Calu3 (cell line): ENCODE measurements at regions of chr9 and their contacts with region 1.

Region 1: DNA sequence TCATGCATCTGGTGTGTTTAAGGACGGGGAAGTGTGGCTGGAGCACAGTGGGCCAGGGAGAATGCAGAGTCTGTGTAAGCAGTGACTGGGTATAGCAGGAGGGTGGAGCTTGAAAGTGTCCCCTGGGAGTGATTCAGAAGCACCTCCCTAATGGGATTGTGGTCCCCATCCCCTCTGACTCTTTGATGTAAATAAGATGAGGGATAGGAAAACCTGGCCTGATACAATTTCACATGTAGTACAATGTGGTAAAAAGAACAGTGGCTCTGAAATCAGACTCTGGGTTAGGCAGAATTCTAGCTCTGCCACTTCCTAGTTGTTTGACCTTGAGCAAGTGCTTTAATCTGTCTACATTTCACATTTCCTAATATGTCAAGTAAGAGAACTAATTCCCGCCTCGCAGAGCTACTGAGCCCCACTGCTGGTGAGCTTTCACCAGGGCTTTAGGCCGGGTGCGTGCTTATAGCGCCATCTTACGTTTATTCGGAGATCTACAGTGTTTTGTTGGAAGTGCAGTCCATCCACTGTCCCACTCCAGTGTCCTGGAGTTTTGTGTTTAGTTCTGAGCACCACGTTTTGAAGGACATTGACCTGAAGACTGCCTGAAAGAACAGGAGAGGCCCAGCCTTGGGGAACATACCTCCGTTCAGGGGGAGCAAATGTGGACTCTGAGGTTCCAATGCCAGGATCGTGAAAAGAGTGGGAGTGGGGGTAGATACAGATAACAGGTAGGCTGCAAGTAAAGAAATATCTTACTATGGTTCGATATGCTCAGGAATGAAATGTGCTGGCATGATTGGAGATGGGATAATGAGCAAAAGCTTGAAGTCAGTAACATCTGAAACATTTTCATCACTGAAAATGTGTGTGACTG is 51.2 kb upstream of the TESK1 start:
- DNase-seq: peak; percentile 58
- H3K4me3 Mint-ChIP-seq: no peak overlapping the region
- H3K27ac Mint-ChIP-seq: no peak overlapping the region
- H3K4me1 Mint-ChIP-seq: no peaks in the 10 kb centered on the region
- H3K27me3 Mint-ChIP-seq: no peaks in the 10 kb centered on the region
- CTCF ChIP-seq: peak; percentile 58

Region 2: DNA sequence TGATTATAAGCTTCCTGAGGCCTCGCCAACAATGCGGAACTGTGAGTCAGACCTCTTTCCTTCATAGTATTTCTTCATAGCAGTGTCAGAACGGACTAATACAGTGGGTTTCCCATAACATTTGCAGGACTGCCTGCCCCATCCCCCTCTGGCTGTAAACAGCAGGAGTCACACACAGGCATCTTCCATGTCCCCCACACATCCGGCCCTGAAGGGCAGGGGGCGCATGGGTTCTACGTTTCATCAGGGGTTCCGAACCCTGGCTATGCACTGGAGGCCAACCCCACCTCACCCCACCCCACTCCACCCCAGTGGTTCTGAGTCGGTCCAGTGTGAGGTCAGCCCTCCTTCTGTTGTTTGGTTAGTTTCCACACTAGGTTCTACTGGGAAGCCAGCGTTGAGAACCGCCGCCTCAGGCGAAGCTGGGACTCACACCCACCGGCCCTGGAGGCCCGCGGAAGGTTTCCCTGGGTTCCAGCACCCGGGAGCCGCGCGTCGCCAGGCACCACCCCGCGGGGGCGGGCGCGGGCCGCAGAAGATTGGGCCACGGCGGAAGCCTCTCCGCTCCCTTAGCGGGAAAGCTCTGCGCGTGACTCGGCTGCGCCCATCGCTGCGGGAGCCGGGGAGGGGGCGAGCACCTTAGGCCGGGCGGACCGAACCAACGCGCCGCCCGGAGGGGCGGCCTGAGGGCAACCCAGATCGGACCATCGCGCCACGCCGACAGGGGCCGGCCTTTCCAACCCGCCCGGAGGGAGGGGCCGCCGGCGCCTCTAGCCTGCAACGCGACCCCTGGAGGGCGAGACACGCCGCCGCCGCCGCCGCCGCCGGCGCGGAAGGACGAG is 64.4 kb before region 1 on chr9 and contains the start of gene RUSC2:
- CTCF ChIA-PET with region 1: interaction called, 15 read pairs
- intact Hi-C with region 1: loop called (anchors 2 kb)
- DNase-seq: peak; percentile 78
- H3K4me3 Mint-ChIP-seq: peak within 1 kb of the TSS; percentile 83
- H3K27ac Mint-ChIP-seq: peak within 1 kb of the TSS; percentile 75
- H3K4me1 Mint-ChIP-seq: peaks cover 31% of the 10 kb centered on the region
- H3K27me3 Mint-ChIP-seq: no peaks in the 10 kb centered on the region
- CTCF ChIP-seq: peak; percentile 29
- total RNA-seq, gene RUSC2: 8.6 and 10.5 TPM in 2 replicates

Region 3: DNA sequence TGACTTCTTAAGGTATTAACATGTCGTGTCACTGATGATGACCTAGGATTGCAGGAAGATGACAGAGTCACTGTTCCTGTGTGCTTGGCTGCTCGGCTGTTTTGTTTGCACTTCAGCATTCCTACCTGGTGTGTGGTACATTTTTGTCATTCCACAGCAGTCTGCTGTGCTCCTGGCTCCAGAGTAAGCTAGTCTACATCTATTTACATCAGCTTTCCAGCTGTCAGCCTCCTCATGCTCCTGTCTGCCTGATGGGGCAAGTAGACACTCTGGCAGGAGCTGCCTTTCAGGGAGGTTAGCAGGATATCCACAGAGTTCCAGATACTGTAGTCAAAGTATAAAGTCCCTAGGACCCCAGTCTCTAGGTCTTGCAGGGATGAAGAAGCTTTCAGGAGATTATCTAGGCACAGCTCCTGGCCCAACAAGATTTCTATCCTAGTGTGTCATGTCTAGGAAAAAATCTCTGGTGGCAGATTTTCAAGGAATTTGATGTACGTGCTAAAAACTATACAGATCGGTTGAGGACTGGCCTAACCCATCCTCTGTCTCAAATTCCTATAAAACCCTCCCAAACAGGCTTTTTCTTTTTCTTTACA is 35.6 kb before region 1 on chr9:
- CTCF ChIA-PET with region 1: interaction called, 13 read pairs
- intact Hi-C with region 1: loop called (anchors 5 kb)
- DNase-seq: peak; percentile 66
- H3K4me3 Mint-ChIP-seq: peak overlapping the region; percentile 16
- H3K27ac Mint-ChIP-seq: peak overlapping the region; percentile 86
- H3K4me1 Mint-ChIP-seq: peaks cover 58% of the 10 kb centered on the region
- H3K27me3 Mint-ChIP-seq: no peaks in the 10 kb centered on the region
- CTCF ChIP-seq: no peak

Region 4: GRCh38 chr9:35569206-35569605 is 15.3 kb after region 1 on chr9:
- CTCF ChIA-PET with region 1: no interaction called
- intact Hi-C with region 1: no loop called
- DNase-seq: no peak
- H3K4me3 Mint-ChIP-seq: no peak overlapping the region
- H3K27ac Mint-ChIP-seq: no peak overlapping the region
- H3K4me1 Mint-ChIP-seq: no peaks in the 10 kb centered on the region
- H3K27me3 Mint-ChIP-seq: no peaks in the 10 kb centered on the region
- CTCF ChIP-seq: no peak